ENCODE measurements at regions of chr18 and their contacts with region 1.

Region 1: GRCh38 chr18:45974088-45974536 is 7.0 kb upstream of the EPG5 start:
- DNase-seq: peak in 40 of 42 donors; percentile 17 to 82 (median 64)

Region 2: DNA sequence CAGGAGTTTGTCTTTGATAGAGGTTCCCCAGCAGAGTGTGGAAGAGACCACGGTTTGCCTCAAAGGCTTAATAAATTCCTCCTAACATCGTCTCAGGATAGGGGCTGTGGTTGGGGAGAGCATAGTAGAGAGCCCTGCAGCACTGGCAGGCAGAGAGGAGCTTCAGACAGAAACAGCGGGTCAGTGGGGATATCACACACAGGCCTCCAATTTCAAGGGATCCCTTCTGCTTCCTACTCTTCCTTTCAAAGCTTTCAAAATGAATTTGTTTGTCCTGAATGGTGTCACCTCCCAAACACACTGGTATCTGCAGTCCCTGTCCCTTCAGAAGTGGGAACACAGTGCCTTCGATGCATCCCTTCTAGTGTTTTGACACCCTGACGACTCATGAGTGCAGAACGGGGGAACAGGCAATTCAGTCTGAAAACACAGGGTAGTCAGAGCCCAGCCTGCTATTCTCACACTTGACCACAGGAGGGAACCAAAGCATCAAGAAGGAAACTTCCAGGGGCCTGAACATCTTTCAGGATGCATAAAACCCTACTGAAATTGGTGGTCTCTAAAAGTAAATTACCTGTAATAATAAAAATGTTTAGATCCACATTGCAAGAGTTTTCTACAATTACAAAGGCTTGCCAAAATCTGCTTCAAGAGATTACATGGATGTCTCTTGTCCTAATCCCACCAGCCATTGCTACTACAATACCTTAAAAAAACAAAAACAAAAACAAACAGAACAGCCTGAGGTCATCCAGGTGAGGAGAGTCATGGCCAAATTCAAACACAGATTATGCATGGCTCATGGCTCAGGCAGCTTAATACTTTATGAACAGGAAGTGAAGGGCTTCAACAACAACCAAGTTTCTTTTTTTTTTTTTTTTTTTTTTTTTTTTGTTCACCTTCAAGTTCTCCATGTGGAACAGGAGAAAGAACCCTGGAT is 309.0 kb before region 1 on chr18:
- intact Hi-C with region 1: loop called (anchors 10 kb)
- DNase-seq: peak; percentile 10 to 87 (median 68)

Region 3: GRCh38 chr18:46042571-46043123 is 68.5 kb after region 1 on chr18:
- intact Hi-C with region 1: no loop called
- DNase-seq: no peak

Region 4: DNA sequence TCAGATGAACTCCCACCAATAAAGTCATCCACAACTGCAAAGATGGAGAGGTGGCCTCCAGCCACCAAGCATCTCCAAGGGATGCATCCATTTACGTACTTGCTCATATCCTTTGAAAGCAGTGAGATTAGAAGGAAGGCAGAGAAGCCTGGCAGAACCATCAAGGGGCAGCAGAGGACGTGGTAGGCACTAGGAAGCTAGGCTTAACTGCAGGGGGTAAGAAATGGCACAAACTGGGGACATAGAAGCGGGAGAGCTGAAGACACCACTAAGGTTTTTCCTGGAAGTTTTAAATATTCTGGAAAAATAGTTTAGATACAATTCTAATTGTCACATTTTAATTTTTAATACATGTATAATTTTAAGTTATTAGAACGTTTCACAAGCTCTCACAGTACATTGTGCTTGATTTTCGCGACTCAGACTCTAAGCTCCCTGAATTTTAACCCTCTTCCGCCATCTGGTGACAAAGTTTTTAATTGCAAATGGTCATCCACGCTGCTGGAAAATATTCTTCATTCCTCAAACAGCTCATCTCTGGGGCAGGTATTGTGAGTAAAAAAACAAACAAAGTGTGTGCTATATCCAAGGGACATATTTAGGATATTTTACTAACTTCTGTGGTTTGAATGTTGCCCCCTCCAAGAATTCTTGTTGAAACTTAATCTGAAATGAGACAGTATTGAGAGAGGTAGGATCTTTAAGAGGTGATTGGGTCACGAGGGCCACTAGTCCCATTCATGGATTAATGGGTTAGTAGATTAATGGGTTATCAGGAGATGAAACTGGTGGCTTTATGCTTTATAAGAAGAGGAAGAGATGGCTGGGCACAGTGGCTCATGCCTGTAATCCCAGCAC is 99.6 kb after region 1 on chr18:
- intact Hi-C with region 1: loop called (anchors 5 kb)
- DNase-seq: peak in 21 of 42 donors; percentile 24 to 81 (median 55)

Region 5: DNA sequence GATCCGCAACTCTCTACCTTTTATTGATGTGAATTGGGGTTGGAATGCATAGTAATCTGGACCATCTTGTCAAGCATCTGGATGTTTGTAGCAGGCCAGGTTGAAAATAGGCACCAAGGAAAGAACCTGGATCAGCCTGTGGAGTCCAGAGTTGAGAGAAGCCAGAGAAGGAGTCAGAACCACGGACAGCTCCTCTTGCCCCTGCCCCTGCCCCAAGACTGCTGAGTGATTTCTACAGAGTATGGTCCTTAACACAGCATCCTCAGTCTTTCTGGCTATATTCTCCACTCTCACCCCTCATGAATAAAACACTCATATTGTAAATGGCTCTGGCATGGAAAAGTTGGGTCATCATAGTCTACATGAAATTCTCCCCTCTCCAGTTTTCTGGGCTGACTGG is 528.3 kb after region 1 on chr18:
- intact Hi-C with region 1: no loop called
- DNase-seq: no peak